Activated B cell treated with CpG ODN at 0.5 μM for 24 hours (primary cell): ENCODE measurements at regions of chr12 and their contacts with region 1.

Region 1: GRCh38 chr12:96399919-96400797 is at the start of gene CDK17:
- DNase-seq: peak; percentile 91
- ATAC-seq: peak; percentile 72
- H3K4me3 Mint-ChIP-seq: peak within 1 kb of the TSS; percentile 95
- H3K27ac Mint-ChIP-seq: peak within 1 kb of the TSS; percentile 95
- H3K4me1 Mint-ChIP-seq: peaks cover 61% of the 10 kb centered on the region
- H3K27me3 Mint-ChIP-seq: no peaks in the 10 kb centered on the region
- CTCF ChIP-seq: no peak
- total RNA-seq, gene CDK17: 52.1 and 57.3 TPM in 2 replicates

Region 2: GRCh38 chr12:95942524-95943329 is 457.4 kb before region 1 on chr12 and contains the start of gene CCDC38:
- CTCF ChIA-PET with region 1: no interaction called
- POLR2A ChIA-PET with region 1: interaction called, 3 read pairs
- intact Hi-C with region 1: loop called (anchors 2 kb)
- DNase-seq: peak; percentile 67
- ATAC-seq: peak; percentile 92
- H3K4me3 Mint-ChIP-seq: peak within 1 kb of the TSS; percentile 90
- H3K27ac Mint-ChIP-seq: peak within 1 kb of the TSS; percentile 83
- H3K4me1 Mint-ChIP-seq: peaks cover 10% of the 10 kb centered on the region
- H3K27me3 Mint-ChIP-seq: no peaks in the 10 kb centered on the region
- CTCF ChIP-seq: no peak
- total RNA-seq, gene CCDC38: 0.09 and 0.42 TPM in 2 replicates

Region 3: DNA sequence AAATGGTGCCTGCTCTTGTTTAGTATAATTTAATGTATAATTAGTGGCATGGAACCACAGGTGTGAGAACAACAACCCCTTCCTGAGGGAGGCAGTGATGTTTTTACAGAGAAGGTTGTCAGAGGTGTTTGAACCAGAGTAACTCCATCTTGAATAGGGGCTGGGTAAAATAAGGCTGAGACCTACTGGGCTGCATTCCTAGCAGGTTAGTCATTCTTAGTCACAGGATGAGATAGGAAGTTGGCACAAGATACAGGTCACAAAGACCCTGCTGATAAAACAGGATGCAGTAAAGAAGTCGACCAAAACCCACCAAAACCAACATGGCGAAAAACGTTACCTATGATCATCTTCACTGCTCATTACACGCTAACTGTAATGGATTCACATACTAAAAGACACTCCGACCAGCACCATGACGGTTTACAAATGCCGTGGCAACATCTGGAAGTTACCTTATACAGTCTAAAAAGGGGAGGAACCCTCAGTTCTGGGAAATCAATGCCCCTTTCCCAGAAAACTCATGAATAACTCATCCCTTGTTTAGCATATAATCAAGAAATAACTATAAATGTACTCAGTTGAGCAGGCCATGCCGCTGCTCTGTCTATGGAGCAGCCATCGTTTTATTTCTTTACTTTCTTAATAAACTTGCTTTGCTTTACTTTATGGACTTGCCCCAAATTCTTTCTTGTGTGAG is 317.0 kb before region 1 on chr12:
- CTCF ChIA-PET with region 1: no interaction called
- POLR2A ChIA-PET with region 1: no interaction called
- intact Hi-C with region 1: no loop called
- DNase-seq: no peak
- ATAC-seq: no peak
- H3K4me3 Mint-ChIP-seq: no peak overlapping the region
- H3K27ac Mint-ChIP-seq: no peak overlapping the region
- H3K4me1 Mint-ChIP-seq: no peaks in the 10 kb centered on the region
- H3K27me3 Mint-ChIP-seq: peaks cover under 1% of the 10 kb centered on the region
- CTCF ChIP-seq: no peak

Region 4: DNA sequence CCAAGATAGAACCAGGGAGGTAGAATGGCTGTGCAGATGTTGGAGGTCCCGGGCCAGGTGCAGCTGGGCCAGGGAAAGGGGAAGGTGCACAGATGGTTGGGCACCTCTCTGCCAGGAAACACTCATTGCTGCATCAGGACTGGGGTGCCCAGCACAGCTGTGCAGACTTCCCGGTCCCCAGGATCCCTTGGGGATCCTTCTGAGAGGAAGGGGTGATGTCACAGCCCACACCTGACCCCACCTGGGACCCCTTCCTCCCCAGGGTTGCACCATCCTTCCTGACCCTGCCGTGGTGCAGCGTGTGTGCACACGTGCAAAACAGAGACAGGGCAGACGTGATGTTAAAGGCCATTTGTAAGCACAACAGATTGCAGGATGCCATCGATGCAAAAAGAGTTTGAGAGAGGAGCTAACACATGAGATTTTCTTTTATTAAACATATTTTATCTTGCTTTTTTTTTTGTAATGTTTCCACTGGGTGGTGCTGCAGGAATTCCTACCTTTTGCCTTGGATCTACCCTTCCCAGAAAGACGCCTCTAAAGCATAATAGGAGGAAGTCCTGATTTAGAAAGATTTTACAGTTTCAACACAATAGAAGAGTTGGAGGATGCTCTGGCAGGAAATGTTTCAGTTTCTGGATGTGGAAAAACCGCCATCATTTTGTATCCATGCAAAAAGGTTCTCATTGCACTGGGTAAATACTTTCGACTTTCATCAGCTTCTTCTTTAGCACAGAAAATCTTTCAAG is 191.2 kb before region 1 on chr12:
- CTCF ChIA-PET with region 1: no interaction called
- POLR2A ChIA-PET with region 1: interaction called, 15 read pairs
- intact Hi-C with region 1: no loop called
- DNase-seq: peak; percentile 54
- ATAC-seq: peak; percentile 81
- H3K4me3 Mint-ChIP-seq: peak overlapping the region; percentile 64
- H3K27ac Mint-ChIP-seq: peak overlapping the region; percentile 82
- H3K4me1 Mint-ChIP-seq: peaks cover 99% of the 10 kb centered on the region
- H3K27me3 Mint-ChIP-seq: no peaks in the 10 kb centered on the region
- CTCF ChIP-seq: no peak

Region 5: DNA sequence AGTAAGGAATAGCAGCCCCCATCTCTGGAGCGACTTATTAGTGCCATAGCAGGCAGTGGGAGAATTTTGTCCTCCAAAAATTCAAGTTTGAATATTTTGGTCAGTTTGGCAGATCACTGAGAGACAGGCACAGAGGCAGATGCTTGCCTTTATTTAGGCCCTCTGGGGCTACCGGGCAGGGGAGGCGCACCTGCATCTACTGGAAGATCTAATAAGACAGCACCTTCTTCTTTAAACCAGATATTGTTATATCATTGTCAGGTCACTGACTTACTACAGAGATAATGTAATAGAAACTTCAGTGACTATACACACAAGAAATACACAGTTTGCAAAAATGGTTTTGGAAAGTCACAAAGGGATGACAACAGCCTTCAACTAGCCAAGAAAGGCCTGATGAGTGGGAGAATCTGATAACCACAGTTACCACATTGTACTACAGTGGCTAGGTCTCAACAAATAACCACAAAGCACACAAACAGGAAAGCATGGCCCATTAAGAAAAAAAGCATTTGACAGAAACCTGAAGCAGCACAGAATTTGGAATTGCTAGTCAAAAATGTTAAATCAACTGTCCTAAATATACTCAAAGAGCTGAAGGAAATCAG is 56.7 kb before region 1 on chr12:
- CTCF ChIA-PET with region 1: interaction called, 3 read pairs
- POLR2A ChIA-PET with region 1: interaction called, 11 read pairs
- intact Hi-C with region 1: no loop called
- DNase-seq: no peak
- ATAC-seq: no peak
- H3K4me3 Mint-ChIP-seq: no peak overlapping the region
- H3K27ac Mint-ChIP-seq: no peak overlapping the region
- H3K4me1 Mint-ChIP-seq: peaks cover 42% of the 10 kb centered on the region
- H3K27me3 Mint-ChIP-seq: no peaks in the 10 kb centered on the region
- CTCF ChIP-seq: no peak

Region 6: DNA sequence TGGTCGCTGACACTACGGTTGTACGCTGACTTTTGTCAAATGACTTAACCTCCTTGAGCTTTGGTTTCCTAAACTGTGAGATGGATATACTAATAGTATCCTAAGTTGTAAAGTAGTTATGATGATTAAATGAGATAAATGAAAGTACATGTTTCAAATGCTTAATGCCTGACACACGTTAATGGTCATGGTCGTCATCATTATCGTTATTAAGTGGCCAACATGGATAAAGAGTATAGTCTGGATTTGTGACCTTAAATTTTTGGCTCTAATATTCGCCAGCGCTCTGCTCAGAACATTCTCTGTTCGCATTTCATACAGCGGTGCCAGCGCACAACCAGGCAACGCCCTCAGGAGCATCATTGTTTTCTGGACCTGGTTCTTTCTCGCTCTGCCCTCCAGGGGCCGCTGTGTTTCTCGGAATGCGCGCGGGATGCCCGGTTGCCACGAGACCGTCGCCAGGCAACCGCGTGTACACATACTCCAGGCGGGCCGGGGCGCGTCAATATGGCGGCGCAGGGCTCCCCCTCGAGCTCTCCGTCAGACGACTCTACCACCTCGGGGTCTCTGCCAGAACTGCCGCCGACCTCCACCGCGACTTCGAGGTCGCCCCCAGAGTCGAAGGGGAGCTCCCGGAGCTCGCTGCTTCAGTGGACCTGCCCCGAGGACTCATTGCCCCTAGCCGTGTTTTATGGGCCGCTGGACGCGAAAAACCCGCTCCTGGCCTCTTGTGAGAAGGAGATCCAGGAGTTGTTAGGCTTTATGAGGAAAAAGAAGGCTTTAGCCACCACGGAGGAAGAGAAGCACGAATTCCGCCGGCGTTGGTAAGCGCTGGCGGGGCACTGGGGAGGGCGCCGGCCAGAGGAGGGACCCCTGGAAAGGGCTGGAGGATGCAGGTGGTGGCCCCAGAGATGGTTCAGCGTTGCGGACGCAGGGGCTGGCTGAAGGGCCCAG is 89.2 kb after region 1 on chr12 and contains the start of gene CFAP54:
- CTCF ChIA-PET with region 1: interaction called, 13 read pairs
- POLR2A ChIA-PET with region 1: interaction called, 15 read pairs
- intact Hi-C with region 1: loop called (anchors 1 kb)
- DNase-seq: peak; percentile 91
- ATAC-seq: peak; percentile 90
- H3K4me3 Mint-ChIP-seq: peak within 1 kb of the TSS; percentile 90
- H3K27ac Mint-ChIP-seq: peak within 1 kb of the TSS; percentile 82
- H3K4me1 Mint-ChIP-seq: peaks cover 22% of the 10 kb centered on the region
- H3K27me3 Mint-ChIP-seq: no peaks in the 10 kb centered on the region
- CTCF ChIP-seq: peak; percentile 65
- total RNA-seq, gene CFAP54: 0.44 and 0.64 TPM in 2 replicates

Region 7: DNA sequence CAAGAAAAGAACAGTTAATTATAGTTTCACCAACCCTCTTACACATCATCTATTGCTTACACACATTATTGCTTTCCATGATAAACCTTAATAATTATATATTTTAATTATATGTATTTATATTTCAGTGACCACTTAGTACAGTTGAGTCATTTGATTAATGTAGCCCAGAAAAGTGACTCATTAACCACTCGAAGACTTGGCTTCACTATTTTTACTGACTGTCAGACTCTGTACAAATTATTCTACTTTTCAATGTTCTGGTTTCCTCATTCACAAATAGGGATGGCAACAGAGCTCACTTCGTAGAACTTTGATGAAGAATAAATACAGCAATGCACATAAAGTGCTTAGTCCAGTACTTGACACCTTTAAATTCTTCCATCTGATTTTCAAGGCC is 187.5 kb after region 1 on chr12:
- CTCF ChIA-PET with region 1: no interaction called
- POLR2A ChIA-PET with region 1: no interaction called
- intact Hi-C with region 1: no loop called
- DNase-seq: no peak
- ATAC-seq: no peak
- H3K4me3 Mint-ChIP-seq: no peak overlapping the region
- H3K27ac Mint-ChIP-seq: no peak overlapping the region
- H3K4me1 Mint-ChIP-seq: peaks cover 2% of the 10 kb centered on the region
- H3K27me3 Mint-ChIP-seq: peaks cover 17% of the 10 kb centered on the region
- CTCF ChIP-seq: no peak